Sciatic nerve (tissue), 2 donors: ENCODE measurements at regions of chr5 and their contacts with region 1.

Region 1: GRCh38 chr5:17436761-17437221 is 61.2 kb upstream of the TAF11L2 start:
- DNase-seq: no peak
- ATAC-seq: peak; percentile 72

Region 2: DNA sequence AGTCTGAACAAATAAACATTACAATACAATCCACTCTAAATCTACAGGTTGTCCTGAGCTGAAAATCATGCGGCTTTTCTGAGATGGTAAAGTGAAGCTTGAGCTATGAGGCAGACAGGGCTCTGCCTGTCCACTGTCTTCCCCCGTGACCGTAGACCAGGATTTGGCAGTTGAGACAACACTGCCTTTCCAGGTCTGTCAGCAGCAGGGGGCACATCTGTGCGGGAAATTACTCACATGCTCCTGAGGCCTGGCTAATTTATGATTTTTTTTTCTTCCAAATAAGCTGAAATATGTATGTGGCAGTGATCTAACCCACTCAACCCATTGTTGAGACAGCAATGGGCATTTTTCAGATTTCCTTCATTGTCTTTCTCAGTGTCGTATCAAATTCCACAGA is 1628.9 kb before region 1 on chr5:
- intact Hi-C with region 1: no loop called
- DNase-seq: no peak
- ATAC-seq: peak; percentile 88

Region 3: DNA sequence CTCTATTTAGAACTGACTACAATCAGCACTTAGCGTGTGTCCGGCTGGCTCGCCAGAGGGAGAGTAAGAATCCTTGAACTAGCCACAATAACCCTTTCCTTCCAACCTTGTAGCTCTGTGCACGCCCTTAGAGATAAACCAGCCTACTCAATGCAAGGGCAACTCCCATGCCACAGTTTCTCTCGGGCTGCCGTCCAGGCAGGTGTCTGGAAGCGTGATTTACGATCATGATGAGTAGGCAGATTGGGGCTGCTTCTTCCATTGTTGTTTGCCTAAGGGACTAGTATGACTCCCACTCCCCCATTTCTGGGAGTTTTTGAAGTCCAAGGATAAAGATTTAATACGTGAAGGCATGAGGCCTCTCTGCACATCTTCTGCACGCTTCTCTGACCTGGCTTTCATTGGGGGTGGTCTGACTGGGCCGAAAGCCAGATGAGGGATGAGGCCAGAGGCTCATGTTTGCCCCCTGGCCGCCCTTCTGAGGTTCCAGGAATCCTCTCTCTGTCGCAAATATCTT is 366.7 kb before region 1 on chr5:
- intact Hi-C with region 1: loop called (anchors 10 kb)
- DNase-seq: no peak
- ATAC-seq: no peak

Region 4: GRCh38 chr5:17896605-17897004 is 459.8 kb after region 1 on chr5:
- intact Hi-C with region 1: no loop called
- DNase-seq: no peak
- ATAC-seq: peak; percentile 70